ENCODE measurements at regions of chr2 and their contacts with region 1.

Region 1: GRCh38 chr2:96305091-96305978 is at the start of gene SNRNP200:
- DNase-seq: peak; percentile 91
- H3K4me3 ChIP-seq: peak within 1 kb of the TSS; percentile 51
- H3K4me3 Mint-ChIP-seq: peak within 1 kb of the TSS; percentile 96
- H3K27ac Mint-ChIP-seq: peak within 1 kb of the TSS; percentile 99
- H3K4me1 ChIP-seq: no peaks in the 10 kb centered on the region
- H3K4me1 Mint-ChIP-seq: peaks cover 17% of the 10 kb centered on the region
- H3K27me3 ChIP-seq: no peaks in the 10 kb centered on the region
- H3K27me3 Mint-ChIP-seq: no peaks in the 10 kb centered on the region
- CTCF ChIP-seq: no peak
- total RNA-seq, gene SNRNP200: 240 and 259 TPM in 2 replicates

Region 2: GRCh38 chr2:96330407-96330806 is 25.1 kb after region 1 on chr2:
- CTCF ChIA-PET with region 1: no interaction called
- POLR2A ChIA-PET with region 1: interaction called, 13 read pairs
- intact Hi-C with region 1: loop called (anchors 1 kb)
- DNase-seq: no peak
- H3K4me3 ChIP-seq: no peak overlapping the region
- H3K4me3 Mint-ChIP-seq: no peak overlapping the region
- H3K27ac Mint-ChIP-seq: no peak overlapping the region
- H3K4me1 ChIP-seq: no peaks in the 10 kb centered on the region
- H3K4me1 Mint-ChIP-seq: peaks cover 7% of the 10 kb centered on the region
- H3K27me3 ChIP-seq: no peaks in the 10 kb centered on the region
- H3K27me3 Mint-ChIP-seq: no peaks in the 10 kb centered on the region
- CTCF ChIP-seq: no peak

Region 3: DNA sequence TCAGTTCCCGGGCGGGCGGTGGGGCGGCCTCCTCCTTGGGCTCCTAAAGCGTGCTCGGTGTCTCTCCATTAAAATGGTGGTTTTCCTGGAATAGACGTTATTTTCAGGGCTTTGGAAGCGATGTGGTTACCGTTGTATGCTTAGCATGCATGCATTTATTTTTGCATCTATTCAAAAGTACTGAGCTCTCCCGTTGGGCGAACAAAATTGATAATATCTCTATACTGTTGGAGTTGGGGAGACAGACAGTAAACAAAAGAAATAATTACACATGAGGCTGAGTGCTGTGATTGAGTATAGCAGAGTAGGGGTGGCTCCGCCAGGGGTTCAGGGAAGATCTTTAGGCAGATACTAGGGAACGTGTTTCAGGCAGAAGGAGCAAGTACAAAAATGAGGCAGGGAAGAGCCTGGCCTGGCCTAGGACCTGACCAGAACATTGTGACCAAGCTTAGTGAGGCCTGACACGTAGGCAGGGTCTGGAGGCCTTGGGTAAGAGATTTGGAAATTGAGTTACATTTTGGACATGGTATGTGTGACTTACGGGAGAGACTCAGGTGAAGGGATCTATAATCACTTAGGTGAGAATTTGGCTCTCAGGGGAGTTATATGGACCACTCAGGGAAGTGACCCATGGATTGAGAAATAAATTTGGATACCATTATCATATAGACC is 30.9 kb after region 1 on chr2:
- CTCF ChIA-PET with region 1: no interaction called
- POLR2A ChIA-PET with region 1: interaction called, 13 read pairs
- intact Hi-C with region 1: loop called (anchors 1 kb)
- DNase-seq: no peak
- H3K4me3 ChIP-seq: peak overlapping the region; percentile 94
- H3K4me3 Mint-ChIP-seq: peak overlapping the region; percentile 78
- H3K27ac Mint-ChIP-seq: peak overlapping the region; percentile 53
- H3K4me1 ChIP-seq: peaks cover 10% of the 10 kb centered on the region; the same call in 1 of the 2 replicates
- H3K4me1 Mint-ChIP-seq: peaks cover 28% of the 10 kb centered on the region
- H3K27me3 ChIP-seq: no peaks in the 10 kb centered on the region
- H3K27me3 Mint-ChIP-seq: no peaks in the 10 kb centered on the region
- CTCF ChIP-seq: no peak

Region 4: DNA sequence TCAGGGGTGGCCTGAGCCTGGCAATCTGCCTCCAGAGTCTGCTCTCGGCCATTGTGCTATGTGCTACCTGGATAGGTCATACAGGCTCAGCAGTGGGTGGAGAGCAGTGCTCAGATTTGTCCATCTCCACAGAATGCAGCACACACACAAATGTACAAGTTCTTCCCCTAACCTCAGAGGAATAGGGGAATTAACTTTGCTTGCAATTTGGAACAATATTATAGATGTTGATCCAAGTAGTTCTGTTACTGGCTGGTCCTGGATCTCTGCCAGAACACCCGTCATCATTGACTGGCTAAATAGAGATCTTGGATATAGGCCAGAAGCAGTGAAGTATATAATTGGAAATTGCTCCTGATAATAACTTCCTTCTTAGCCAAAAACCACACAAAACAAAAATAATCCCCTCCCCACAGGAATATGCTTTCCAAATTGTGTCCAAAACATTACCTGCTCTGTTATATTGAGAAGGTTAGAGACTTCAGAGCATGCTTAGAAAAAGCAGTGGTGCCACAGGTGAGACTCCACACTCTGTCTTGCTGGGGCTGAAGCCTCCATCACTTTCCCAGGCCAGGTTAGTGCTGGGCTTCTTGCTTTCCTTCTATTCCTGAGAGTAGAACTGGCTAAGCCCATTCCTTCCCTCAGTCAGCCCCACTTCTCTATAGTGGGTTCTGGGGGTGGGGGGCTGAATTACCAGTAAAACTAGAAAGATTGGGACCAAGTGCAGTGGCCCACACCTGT is 69.0 kb after region 1 on chr2:
- CTCF ChIA-PET with region 1: no interaction called
- POLR2A ChIA-PET with region 1: no interaction called
- intact Hi-C with region 1: no loop called
- DNase-seq: no peak
- H3K4me3 ChIP-seq: no peak overlapping the region
- H3K4me3 Mint-ChIP-seq: no peak overlapping the region
- H3K27ac Mint-ChIP-seq: no peak overlapping the region
- H3K4me1 ChIP-seq: no peaks in the 10 kb centered on the region
- H3K4me1 Mint-ChIP-seq: no peaks in the 10 kb centered on the region
- H3K27me3 ChIP-seq: no peaks in the 10 kb centered on the region
- H3K27me3 Mint-ChIP-seq: no peaks in the 10 kb centered on the region
- CTCF ChIP-seq: no peak